Right ventricle myocardium inferior (tissue), 1 donor: ENCODE measurements at regions of chr3 and their contacts with region 1.

Region 1: GRCh38 chr3:169863458-169863899 is 6.3 kb downstream of the LRRC31 start:
- DNase-seq: no peak
- ATAC-seq: peak; percentile 62

Region 2: DNA sequence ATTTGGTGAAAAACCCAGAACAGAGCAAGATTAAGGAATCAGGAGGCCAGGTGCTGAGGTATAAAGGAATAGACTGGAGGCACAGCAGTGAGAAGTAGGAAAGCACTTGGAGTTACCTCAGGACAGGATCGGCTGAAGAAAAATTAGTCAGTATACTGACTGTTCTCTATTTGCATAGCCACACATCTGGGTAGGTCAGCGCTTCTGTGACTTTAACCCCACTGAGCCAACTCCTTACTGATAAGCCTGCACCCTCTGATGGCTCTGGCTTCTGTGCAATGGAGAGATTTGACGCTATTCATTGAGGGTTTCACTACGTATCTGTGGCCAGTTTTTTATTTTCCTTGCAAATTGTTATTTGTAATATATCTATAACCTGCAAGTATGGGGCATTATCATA is 222.3 kb before region 1 on chr3:
- intact Hi-C with region 1: no loop called
- DNase-seq: no peak
- ATAC-seq: no peak

Region 3: DNA sequence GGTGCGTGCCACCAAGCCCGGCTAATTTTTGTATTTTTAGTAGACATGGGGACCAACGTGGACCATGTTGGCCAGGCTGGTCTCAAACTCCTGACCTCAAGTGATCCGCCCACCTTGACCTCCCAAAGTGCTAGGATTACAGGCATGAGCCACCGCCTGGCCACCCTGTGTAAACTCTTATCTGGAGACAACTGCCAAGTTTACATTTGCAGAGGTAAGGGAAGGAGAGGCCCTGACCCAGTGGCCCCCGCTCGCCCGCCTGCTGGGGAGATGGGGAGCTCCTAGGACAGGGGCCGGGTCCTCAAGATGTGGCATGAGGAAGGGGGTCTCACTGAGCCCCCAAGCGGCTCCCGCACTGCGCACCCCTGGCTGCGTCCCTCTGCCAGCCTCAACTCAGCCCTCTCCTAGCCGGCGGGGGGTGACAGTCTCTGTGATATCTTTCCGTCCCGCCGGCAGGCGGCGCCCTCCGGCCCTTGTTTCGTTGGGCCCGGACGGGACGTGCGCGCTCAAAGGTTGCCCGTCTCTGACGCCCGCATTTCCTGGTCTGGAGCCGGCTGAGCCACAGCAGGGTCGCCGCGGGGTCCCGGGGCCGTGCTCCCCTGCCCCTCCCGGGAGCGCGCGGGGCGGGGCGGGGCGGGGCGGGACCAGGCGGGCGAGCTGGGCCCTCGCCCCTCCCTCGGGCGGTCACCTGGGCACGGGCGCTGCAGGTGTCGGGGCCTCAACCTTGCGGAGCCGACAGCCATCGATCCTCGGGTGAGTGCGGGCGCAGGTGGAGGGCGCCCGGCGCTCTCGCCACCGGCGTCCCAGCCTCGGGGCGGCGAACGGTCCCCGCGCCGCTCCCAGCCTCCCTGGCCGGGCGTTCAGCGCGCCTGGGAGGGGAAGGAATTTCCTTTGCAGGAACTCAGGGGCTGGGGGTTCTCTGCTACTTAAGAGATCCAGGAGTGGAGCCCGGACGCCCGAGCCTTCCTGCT is 174.3 kb after region 1 on chr3 and contains the start of gene GPR160:
- intact Hi-C with region 1: loop called (anchors 10 kb)
- DNase-seq: peak; percentile 94
- ATAC-seq: peak; percentile 59
- total RNA-seq, gene GPR160: 1.2 TPM